Posterior cingulate gyrus (tissue), 11 donors: ENCODE measurements at regions of chr11 and their contacts with region 1.

Region 1: GRCh38 chr11:119666463-119667131 is 62.4 kb downstream of the NECTIN1 start:
- DNase-seq: peak; percentile 71 to 97 (median 86)

Region 2: DNA sequence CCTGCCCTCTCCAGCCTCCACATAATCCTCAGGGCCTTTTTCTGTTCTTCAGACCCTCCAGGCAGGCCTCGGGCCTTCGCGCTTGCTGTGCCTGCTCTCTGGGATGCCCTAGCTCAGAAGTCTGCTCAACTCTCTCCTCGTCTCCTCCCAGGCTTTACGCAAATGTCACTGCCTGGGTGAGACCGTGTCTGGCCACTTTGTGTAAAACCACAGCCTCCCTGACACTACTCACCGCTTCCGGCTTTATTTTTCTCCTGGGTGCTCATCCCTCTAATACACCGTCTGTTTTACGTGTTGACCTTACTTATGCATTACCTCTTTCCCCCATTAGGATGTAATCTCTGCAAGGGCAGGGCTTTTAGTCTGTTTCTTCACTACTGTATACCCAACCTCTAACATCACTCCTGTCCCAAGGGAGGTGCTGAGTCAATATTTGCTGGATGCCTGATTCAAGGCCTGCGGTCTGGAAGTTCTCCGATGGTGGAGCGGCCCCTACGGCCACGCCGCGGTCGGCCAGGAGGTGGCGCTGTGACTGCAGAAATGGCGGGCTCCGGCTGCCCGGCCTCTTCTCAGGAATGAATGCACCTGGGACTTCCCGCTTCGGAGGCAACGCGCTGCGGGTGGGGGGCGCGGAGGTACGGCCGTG is 185.5 kb before region 1 on chr11:
- intact Hi-C with region 1: loop called (anchors 5 kb)
- DNase-seq: peak; percentile 73 to 98 (median 92)

Region 3: GRCh38 chr11:119533921-119534736 is 132.5 kb before region 1 on chr11:
- intact Hi-C with region 1: loop called (anchors 5 kb)
- DNase-seq: peak; percentile 71 to 98 (median 88)

Region 4: GRCh38 chr11:119712459-119713358 is 46.1 kb after region 1 on chr11:
- intact Hi-C with region 1: no loop called
- DNase-seq: peak in 3 of 10 donors; percentile 14 to 52 (median 40)

Region 5: GRCh38 chr11:119728651-119729580 is 62.3 kb after region 1 on chr11 and contains the start of gene NECTIN1:
- intact Hi-C with region 1: loop called (anchors 1 kb)
- DNase-seq: peak; percentile 83 to 98 (median 90)

Region 6: GRCh38 chr11:119878990-119879389 is 212.4 kb after region 1 on chr11:
- intact Hi-C with region 1: loop called (anchors 10 kb)
- DNase-seq: peak in 2 of 10 donors; percentile 43 to 77

Region 7: DNA sequence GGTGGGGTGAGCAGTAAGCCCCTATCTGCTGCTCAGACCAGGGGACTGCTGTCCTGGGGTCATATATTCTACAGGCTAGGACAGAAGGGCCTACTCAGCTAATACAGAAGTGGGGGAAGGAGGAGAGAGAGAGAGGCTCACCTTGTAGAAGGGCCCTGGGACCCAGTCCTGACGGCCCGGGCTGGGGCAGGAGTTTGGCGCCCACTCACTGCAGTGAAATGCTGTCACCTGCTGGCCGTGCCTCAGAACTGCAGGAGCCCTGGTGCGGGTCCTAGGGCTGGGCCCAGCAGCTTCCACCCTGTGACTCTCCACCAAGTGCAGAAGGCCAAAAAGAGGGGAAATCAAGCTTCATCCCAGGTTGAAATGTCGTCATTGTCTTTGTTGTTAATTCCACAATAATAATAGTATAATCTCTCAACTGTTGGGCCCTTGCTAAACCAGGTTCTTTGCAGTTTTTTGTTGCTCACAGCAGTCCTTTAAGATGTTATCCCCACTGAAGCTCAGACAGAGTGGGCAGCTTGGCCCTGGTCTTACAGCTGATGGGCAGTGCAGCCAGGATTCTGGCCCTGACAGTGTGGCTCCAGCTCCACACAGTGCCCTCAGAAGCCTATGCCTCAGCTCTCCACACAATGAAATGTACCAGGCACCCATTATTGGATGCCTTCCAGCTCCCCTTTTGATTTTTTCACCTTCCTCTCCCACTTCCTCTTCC is 441.7 kb after region 1 on chr11:
- intact Hi-C with region 1: loop called (anchors 1 kb)
- DNase-seq: peak; percentile 71 to 97 (median 88)

Region 8: GRCh38 chr11:120197251-120197891 is 530.8 kb after region 1 on chr11:
- intact Hi-C with region 1: no loop called
- DNase-seq: peak in 1 of 10 donors; percentile 84